Upper lobe of right lung (tissue), 1 donor: ENCODE measurements at regions of chr4 and their contacts with region 1.

Region 1: DNA sequence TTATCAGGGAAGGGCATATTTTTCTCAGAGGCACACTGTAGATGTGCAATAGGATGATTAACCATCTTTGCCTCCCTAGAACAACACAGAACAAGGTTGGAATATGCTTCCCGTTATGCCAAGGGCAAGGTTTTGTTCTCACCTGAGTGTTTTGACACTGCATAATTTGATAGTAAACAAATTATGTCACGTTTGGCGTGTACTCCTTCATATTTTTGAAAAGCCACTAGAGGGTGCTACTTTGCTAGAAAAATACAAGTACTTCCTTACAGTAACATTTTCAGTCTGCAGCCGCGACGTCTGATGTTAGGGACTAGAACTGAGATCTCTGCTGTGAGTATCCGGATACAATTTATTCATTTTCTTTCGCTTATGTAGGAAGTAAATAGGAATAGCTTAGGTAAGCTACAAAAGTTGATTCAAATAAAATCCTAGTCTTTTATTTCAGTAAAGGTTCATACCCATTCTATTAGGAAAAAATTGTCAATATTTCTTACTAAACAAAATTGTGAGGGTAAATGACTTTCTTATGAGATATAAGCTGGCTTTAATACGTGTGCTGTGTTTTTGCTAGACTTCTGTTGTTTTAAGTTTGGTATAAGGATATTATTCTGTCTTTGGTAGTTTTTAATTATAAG is 181.1 kb upstream of the WDFY3 start:
- DNase-seq: no peak
- ATAC-seq: peak; percentile 78
- H3K4me3 ChIP-seq: no peak overlapping the region
- H3K27ac ChIP-seq: no peak overlapping the region
- H3K4me1 ChIP-seq: no peaks in the 10 kb centered on the region
- H3K27me3 ChIP-seq: no peaks in the 10 kb centered on the region
- CTCF ChIP-seq: peak; percentile 69

Region 2: GRCh38 chr4:85756938-85757337 is 609.4 kb after region 1 on chr4:
- intact Hi-C with region 1: loop called (anchors 10 kb)
- DNase-seq: no peak
- ATAC-seq: peak; percentile 66
- H3K4me3 ChIP-seq: no peak overlapping the region
- H3K27ac ChIP-seq: no peak overlapping the region
- H3K4me1 ChIP-seq: no peaks in the 10 kb centered on the region
- H3K27me3 ChIP-seq: no peaks in the 10 kb centered on the region
- CTCF ChIP-seq: peak; percentile 34